Endothelial cell of umbilical vein (primary cell): ENCODE measurements at regions of chr6 and their contacts with region 1.

Region 1: DNA sequence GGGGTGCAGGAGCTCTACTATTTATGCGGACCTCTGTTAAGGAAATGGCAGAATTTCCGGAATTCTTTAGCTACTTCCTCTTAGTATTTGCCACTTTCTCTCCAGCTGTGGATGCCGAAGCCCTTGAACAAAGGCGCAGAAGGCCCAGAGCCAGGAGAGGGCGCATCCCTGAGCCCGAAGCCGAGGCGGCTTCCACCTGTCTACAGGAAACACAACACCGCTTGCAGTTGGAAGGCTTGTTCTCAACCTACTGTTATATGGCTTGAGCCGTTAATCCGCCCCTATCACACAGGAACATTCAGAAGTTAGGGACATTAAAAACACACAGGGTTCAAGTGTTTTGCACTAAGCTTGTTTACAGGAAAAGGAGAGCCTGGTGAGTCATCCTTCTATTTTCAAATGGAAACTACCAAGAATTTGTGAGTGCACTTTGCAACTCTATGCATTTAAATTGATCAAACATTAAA is 417.1 kb downstream of the BCKDHB start:
- DNase-seq: peak; percentile 93
- H3K4me3 ChIP-seq: peak overlapping the region in 1 of 3 experiments; percentile 21
- H3K27ac ChIP-seq: peak overlapping the region; percentile 79
- H3K4me1 ChIP-seq: peaks cover 23% of the 10 kb centered on the region
- H3K27me3 ChIP-seq: no peaks in the 10 kb centered on the region
- CTCF ChIP-seq: peak; percentile 61 to 67
- POLR2A ChIP-seq: no peak

Region 2: DNA sequence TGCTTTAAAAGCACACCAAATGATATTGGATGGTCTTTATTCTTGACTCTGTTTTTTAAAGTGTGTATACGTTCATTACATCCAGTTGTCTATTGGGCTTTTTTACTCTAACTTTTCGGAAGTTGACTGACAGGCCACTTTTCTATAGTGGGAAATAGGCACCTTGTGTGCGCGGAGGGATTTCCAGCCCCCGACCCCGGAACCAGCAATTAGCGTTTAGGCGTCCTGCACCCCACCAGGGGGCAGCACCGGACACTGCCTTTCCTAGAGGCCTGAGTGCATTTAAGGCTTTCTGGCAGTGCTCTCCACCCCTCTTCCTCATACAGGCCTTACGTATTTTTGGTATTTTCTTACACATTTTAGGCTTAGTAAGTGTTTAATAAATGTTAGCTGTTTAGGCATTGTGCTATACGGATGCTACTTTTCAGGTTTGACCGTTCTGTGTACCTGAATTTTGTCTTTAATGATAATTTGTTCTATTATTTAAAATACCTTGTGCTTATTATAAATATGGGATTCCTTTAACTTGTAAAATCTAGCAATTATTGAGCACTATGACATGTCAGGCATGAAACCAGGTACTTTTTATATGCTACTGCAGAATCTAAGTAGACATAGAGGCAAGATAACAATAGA is 185.2 kb before region 1 on chr6:
- CTCF ChIA-PET with region 1: interaction called, 3 read pairs
- POLR2A ChIA-PET with region 1: no interaction called
- dilution Hi-C with region 1: no loop called
- intact Hi-C with region 1: loop called (anchors 1 kb)
- DNase-seq: peak; percentile 31
- H3K4me3 ChIP-seq: no peak overlapping the region
- H3K27ac ChIP-seq: no peak overlapping the region
- H3K4me1 ChIP-seq: peaks cover 4% of the 10 kb centered on the region
- H3K27me3 ChIP-seq: no peaks in the 10 kb centered on the region
- CTCF ChIP-seq: peak; percentile 64 to 69
- POLR2A ChIP-seq: no peak

Region 3: GRCh38 chr6:80638213-80639055 is 114.9 kb after region 1 on chr6:
- CTCF ChIA-PET with region 1: interaction called, 3 read pairs
- POLR2A ChIA-PET with region 1: no interaction called
- dilution Hi-C with region 1: no loop called
- intact Hi-C with region 1: loop called (anchors 1 kb)
- DNase-seq: peak; percentile 97
- H3K4me3 ChIP-seq: no peak overlapping the region
- H3K27ac ChIP-seq: peak overlapping the region; percentile 94
- H3K4me1 ChIP-seq: peaks cover 17% of the 10 kb centered on the region
- H3K27me3 ChIP-seq: no peaks in the 10 kb centered on the region
- CTCF ChIP-seq: no peak
- POLR2A ChIP-seq: peak; percentile 47

Region 4: GRCh38 chr6:80742481-80742880 is 218.9 kb after region 1 on chr6:
- CTCF ChIA-PET with region 1: no interaction called
- POLR2A ChIA-PET with region 1: no interaction called
- dilution Hi-C with region 1: no loop called
- intact Hi-C with region 1: no loop called
- DNase-seq: peak; percentile 33
- H3K4me3 ChIP-seq: no peak overlapping the region
- H3K27ac ChIP-seq: no peak overlapping the region
- H3K4me1 ChIP-seq: no peaks in the 10 kb centered on the region
- H3K27me3 ChIP-seq: no peaks in the 10 kb centered on the region
- CTCF ChIP-seq: peak; percentile 31
- POLR2A ChIP-seq: no peak

Region 5: GRCh38 chr6:80959034-80959433 is 435.5 kb after region 1 on chr6:
- CTCF ChIA-PET with region 1: no interaction called
- POLR2A ChIA-PET with region 1: no interaction called
- dilution Hi-C with region 1: no loop called
- intact Hi-C with region 1: loop called (anchors 2 kb)
- DNase-seq: no peak
- H3K4me3 ChIP-seq: no peak overlapping the region
- H3K27ac ChIP-seq: no peak overlapping the region
- H3K4me1 ChIP-seq: peaks cover 17% of the 10 kb centered on the region
- H3K27me3 ChIP-seq: no peaks in the 10 kb centered on the region
- CTCF ChIP-seq: no peak
- POLR2A ChIP-seq: no peak